Heart left ventricle (tissue), 16 donors: ENCODE measurements at regions of chr2 and their contacts with region 1.

Region 1: DNA sequence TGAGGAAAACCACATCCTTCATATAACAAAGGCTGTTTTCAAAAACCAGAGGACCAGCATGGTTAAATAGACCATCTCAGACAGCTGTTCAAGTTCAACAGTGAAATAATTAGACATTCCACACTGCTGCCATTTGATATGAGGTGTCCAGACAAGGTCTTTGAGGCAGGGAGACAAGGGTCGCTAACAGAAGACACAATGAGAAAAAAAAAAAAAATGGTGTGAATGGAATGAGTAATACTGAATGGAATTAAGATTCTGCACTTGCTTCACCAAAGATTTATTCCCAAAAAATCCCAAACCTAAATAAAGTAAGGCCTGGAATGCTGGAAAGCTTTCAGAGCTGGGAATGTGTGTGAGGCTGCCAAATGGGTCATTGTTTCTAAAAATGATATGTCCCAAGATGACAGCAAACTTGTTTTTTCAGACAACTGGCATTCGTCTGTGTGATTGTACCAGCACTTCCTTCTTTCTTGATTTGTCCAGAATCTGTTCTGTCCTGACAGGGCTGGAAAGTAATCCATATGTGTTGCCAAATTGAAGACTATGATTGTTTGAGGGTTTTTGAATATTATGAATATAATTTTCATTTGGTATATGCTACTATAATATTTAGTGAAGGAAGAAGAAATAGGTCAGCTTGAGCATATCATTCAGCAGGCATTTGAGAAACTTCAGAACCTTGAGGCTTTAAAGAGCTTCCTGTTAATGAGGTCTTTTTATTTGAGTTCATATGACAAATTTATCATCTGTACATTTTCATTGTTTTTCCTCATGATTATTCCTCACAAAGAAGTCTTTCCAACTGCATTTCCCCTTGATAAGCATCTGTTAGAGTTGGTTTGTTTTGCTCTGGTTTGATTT is 85.2 kb upstream of the ITGA4 start:
- DNase-seq: no peak
- ATAC-seq: peak in 2 of 4 donors; percentile 37 to 76
- H3K4me3 ChIP-seq: no peak overlapping the region
- H3K27ac ChIP-seq: peak overlapping the region in 1 of 12 donors; percentile 2
- H3K4me1 ChIP-seq: peaks cover 0 to 25% (median 8%) of the 10 kb centered on the region in 12 donors
- H3K27me3 ChIP-seq: no peaks in the 10 kb centered on the region
- CTCF ChIP-seq: no peak
- POLR2A ChIP-seq: no peak

Region 2: GRCh38 chr2:181430406-181431118 is 58.5 kb after region 1 on chr2:
- intact Hi-C with region 1: loop called in 1 of 10 experiments (anchors 2 kb)
- DNase-seq: no peak
- ATAC-seq: no peak
- H3K4me3 ChIP-seq: no peak overlapping the region
- H3K27ac ChIP-seq: no peak overlapping the region
- H3K4me1 ChIP-seq: peaks cover 0 to 6% (median 0%) of the 10 kb centered on the region in 12 donors
- H3K27me3 ChIP-seq: no peaks in the 10 kb centered on the region
- CTCF ChIP-seq: peak in 6 of 12 donors; percentile 13 to 34 (median 24)
- POLR2A ChIP-seq: no peak

Region 3: DNA sequence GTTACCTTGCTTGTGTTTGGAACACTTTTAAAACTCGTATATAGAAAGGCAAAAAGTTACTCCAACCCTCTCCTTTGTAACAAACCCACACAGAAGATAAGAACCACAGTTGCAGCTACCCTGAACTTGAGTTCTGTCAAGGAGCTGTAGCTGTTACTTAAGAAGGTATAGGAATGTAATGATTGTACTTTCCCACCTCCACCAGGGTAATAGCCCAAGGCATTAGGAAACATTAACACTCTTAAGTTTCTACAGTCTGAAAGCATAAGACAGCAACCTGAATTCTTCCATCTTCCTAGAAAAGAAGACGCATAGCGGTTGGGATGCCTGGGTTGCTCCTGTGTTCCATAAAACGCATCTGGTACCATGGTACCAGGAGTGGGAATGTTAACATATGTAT is 128.2 kb after region 1 on chr2:
- intact Hi-C with region 1: no loop called
- DNase-seq: no peak
- ATAC-seq: no peak
- H3K4me3 ChIP-seq: no peak overlapping the region
- H3K27ac ChIP-seq: no peak overlapping the region
- H3K4me1 ChIP-seq: no peaks in the 10 kb centered on the region
- H3K27me3 ChIP-seq: no peaks in the 10 kb centered on the region
- CTCF ChIP-seq: no peak
- POLR2A ChIP-seq: no peak